Mammary epithelial cell (primary cell): ENCODE measurements at regions of chr7 and their contacts with region 1.

Region 1: DNA sequence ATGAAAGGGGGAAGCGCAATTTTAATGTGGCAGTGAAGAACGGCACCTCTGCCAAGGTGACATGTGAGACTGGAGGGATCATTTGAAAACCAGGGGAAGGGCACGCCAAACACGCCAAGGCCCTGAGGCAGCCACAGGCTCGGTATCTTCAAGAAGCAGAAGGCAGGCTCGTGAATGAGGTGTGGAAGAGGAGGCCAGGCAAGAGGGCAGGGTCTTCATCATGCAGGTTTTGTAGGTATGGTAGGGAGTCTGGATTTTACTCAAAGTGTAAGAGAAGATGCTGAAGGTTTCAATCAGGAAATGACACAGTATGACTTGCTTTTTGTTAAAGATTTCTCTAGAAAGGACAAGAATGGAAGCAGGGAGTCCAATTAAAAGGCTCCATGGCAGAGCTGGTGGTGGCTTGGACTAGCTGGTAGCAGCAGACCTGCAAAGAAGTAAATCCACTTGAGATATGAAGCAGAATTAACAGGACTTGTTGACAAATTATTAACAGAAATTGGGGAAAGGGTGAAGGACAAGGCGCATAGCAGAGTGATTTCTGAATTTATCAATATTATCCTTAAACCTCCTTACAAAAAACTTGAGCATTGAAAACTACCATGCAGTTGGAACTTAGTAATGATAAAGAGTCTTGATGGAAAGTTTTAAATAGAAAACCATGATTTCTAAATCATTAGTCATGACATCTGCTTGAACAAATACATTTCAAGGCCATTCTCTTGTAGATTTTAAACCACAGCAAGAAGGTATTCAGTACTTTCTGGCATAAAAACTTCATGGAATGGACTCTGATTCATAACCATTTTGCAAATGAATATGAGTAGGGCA is 70.4 kb downstream of the COA1 start:
- DNase-seq: peak; percentile 78
- H3K4me3 ChIP-seq: no peak overlapping the region
- H3K27ac ChIP-seq: peak overlapping the region; percentile 59
- H3K4me1 ChIP-seq: peaks cover 38% of the 10 kb centered on the region
- H3K27me3 ChIP-seq: no peaks in the 10 kb centered on the region
- CTCF ChIP-seq: no peak

Region 2: DNA sequence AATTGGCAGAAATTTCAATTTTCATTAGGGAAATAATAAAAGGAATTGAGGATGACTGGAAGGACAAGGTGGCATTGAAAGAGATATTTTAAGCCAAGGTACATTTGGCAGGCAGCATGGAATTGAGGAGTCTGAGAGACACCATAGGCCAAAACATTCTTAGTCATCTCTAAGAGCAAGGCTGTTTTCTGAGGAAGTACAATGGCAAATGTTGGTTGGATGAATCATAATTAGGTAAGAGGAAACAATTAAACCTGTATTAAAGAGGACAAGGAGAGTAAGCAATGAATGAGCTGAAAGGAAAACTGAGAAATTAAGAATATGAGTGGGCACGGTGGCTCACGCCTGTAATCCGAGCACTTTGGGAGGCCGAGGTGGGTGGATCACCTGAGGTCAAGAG is 640.5 kb before region 1 on chr7:
- CTCF ChIA-PET with region 1: no interaction called
- dilution Hi-C with region 1: no loop called
- in situ Hi-C with region 1: no loop called
- intact Hi-C with region 1: no loop called
- DNase-seq: peak; percentile 90
- H3K4me3 ChIP-seq: no peak overlapping the region
- H3K27ac ChIP-seq: no peak overlapping the region
- H3K4me1 ChIP-seq: no peaks in the 10 kb centered on the region
- H3K27me3 ChIP-seq: no peaks in the 10 kb centered on the region
- CTCF ChIP-seq: no peak

Region 3: GRCh38 chr7:43439631-43440401 is 219.1 kb before region 1 on chr7:
- CTCF ChIA-PET with region 1: no interaction called
- dilution Hi-C with region 1: no loop called
- in situ Hi-C with region 1: no loop called
- intact Hi-C with region 1: no loop called
- DNase-seq: peak; percentile 26
- H3K4me3 ChIP-seq: no peak overlapping the region
- H3K27ac ChIP-seq: no peak overlapping the region
- H3K4me1 ChIP-seq: no peaks in the 10 kb centered on the region
- H3K27me3 ChIP-seq: no peaks in the 10 kb centered on the region
- CTCF ChIP-seq: peak; percentile 82

Region 4: GRCh38 chr7:43647673-43648472 is 11.1 kb before region 1 on chr7:
- CTCF ChIA-PET with region 1: no interaction called
- dilution Hi-C with region 1: no loop called
- in situ Hi-C with region 1: no loop called
- intact Hi-C with region 1: loop called (anchors 1 kb)
- DNase-seq: peak; percentile 97
- H3K4me3 ChIP-seq: peak overlapping the region in 1 of 3 experiments; percentile 26
- H3K27ac ChIP-seq: peak overlapping the region; percentile 91
- H3K4me1 ChIP-seq: peaks cover 59% of the 10 kb centered on the region
- H3K27me3 ChIP-seq: no peaks in the 10 kb centered on the region
- CTCF ChIP-seq: no peak

Region 5: DNA sequence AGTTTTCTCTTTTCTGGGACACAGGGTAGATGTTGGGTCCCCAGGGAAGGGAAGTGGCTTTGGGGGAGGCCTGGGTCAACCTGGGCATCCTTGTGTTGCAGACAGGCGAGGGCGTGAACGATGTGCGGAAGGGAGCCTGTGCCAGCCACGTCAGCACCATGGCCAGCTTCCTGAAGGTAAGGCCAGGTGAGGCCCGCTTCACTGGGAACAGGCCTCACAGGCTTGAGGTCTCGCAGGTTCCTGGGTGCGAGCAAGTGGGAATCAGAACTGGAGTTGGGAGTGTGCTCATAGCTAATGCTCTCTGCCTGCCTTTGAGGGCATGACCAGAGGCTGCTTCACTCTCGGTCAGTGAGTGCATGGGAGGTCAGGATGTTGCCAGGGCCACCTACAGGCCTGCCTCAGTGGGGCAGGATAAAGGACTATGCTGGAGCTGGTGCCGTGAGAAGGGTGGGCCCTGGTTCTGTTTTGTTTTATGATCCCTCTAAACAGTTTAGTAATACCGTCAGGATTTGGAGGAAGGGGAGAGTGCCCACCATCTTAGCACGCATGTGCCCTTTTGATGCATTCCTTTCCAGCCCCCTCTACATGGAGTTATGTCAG is 393.9 kb after region 1 on chr7:
- CTCF ChIA-PET with region 1: no interaction called
- dilution Hi-C with region 1: no loop called
- in situ Hi-C with region 1: no loop called
- intact Hi-C with region 1: no loop called
- DNase-seq: no peak
- H3K4me3 ChIP-seq: no peak overlapping the region
- H3K27ac ChIP-seq: no peak overlapping the region
- H3K4me1 ChIP-seq: peaks cover 5% of the 10 kb centered on the region
- H3K27me3 ChIP-seq: no peaks in the 10 kb centered on the region
- CTCF ChIP-seq: no peak

Region 6: DNA sequence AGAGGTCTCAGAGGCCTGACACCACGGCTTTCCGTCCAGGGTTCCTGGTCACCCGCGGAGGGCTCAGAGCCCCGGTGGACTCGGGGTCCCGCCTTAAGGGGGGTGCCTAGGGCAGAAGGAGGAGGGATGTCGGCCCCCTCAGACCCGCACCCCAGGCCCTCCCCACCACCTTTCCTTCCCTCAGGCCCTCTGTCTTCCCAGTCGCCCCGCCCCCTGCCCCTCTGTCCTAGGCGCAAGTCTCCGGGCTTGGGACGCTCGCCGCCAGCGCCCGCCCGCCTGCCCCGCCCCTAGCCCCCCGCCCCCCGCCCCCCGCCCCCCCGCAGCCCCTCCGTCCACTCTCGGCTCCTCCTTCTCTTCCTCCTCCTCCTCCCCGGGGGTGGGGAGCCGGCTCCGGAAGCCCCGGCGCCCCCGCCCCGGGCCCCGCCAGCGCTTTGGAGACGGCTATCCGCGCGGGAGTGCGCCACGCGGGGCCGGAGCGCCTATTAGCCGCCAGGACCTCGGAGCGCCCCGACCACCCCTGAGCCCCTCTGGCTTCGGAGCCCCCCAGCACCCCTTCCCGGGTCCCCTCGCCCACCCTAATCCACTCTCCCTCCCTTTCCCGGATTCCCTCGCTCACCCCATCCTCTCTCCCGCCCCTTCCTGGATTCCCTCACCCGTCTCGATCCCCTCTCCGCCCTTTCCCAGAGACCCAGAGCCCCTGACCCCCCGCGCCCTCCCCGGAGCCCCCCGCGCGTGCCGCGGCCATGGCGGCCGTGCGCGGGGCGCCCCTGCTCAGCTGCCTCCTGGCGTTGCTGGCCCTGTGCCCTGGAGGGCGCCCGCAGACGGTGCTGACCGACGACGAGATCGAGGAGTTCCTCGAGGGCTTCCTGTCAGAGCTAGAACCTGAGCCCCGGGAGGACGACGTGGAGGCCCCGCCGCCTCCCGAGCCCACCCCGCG is 445.3 kb after region 1 on chr7 and contains the start of gene AEBP1:
- CTCF ChIA-PET with region 1: no interaction called
- dilution Hi-C with region 1: no loop called
- in situ Hi-C with region 1: no loop called
- intact Hi-C with region 1: no loop called
- DNase-seq: no peak
- H3K4me3 ChIP-seq: no peak within 1 kb of the TSS
- H3K27ac ChIP-seq: no peak within 1 kb of the TSS
- H3K4me1 ChIP-seq: peaks cover 22% of the 10 kb centered on the region
- H3K27me3 ChIP-seq: no peaks in the 10 kb centered on the region
- CTCF ChIP-seq: no peak
- total RNA-seq, gene AEBP1: 0.24 to 16.7 TPM